Dendritic cell treated with granulocyte-macrophage colony-stimulating factor and Interleukin-4, amounts not matched to agents 40 ng/mL and 50 ng/mL, for 4 days (primary cell): ENCODE measurements at regions of chr5 and their contacts with region 1.

Region 1: GRCh38 chr5:98911280-98912040 is 17.3 kb downstream of the CHD1 start:
- H3K4me3 Mint-ChIP-seq: peak overlapping the region; percentile 20
- H3K27ac Mint-ChIP-seq: peak overlapping the region; percentile 72
- H3K4me1 Mint-ChIP-seq: peaks cover 45% of the 10 kb centered on the region
- H3K27me3 Mint-ChIP-seq: no peaks in the 10 kb centered on the region

Region 2: DNA sequence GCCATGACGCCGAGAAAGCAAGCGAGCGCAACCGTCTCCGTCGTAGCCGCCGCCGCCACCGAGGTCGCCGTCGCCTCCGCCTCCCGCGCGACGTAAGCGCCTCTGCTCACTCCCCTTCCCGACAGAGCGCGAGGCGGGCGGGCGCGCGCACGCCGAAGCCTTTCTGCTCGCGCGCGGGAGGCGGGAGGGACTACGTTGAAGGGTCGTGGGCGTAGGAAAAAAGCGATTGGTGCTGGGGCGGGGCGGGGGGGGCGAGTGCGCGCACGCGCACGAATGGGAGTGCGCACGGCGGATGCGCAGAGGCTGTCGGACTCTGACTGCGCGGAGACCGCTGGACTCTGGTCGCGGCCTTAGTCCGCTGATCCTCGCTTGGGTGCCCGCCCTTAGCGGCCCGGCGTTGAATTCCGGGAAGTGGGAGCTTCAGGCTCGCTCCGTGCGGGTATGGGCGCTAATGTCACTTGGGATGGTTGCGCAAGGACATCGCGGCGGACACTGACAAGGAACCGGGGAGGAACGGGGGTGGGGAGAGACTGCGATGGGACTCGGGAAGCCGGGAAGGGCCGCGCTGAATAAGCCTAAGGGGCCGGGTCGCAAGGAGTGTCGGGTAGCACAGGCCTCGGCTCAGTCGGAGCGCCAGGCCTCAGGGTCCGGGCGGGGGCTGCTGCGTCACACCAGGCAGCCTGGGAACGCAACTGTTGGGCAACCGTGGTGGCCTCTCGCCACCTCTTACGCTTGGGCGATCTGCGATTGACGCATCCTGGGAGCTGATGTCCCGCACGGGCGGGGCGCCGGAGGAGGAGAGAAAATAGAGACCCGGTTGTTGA is 17.6 kb after region 1 on chr5 and contains the start of gene CHD1:
- intact Hi-C with region 1: loop called (anchors 2 kb)
- H3K4me3 Mint-ChIP-seq: peak within 1 kb of the TSS; percentile 100
- H3K27ac Mint-ChIP-seq: peak within 1 kb of the TSS; percentile 95
- H3K4me1 Mint-ChIP-seq: peaks cover 31% of the 10 kb centered on the region
- H3K27me3 Mint-ChIP-seq: no peaks in the 10 kb centered on the region